ENCODE measurements at regions of chr10 and their contacts with region 1.

Region 1: GRCh38 chr10:87878664-87879459 is 15.4 kb downstream of the PTEN start:
- DNase-seq: no peak
- ATAC-seq: no peak
- H3K4me3 ChIP-seq: no peak overlapping the region
- H3K27ac ChIP-seq: no peak overlapping the region
- H3K4me1 ChIP-seq: peaks cover 0 to 80% (median 57%) of the 10 kb centered on the region in 12 donors
- H3K27me3 ChIP-seq: no peaks in the 10 kb centered on the region
- CTCF ChIP-seq: no peak
- POLR2A ChIP-seq: no peak

Region 2: GRCh38 chr10:87585565-87586514 is 293.0 kb before region 1 on chr10:
- intact Hi-C with region 1: no loop called
- DNase-seq: no peak
- ATAC-seq: no peak
- H3K4me3 ChIP-seq: no peak overlapping the region
- H3K27ac ChIP-seq: no peak overlapping the region
- H3K4me1 ChIP-seq: no peaks in the 10 kb centered on the region
- H3K27me3 ChIP-seq: no peaks in the 10 kb centered on the region
- CTCF ChIP-seq: no peak
- POLR2A ChIP-seq: no peak

Region 3: GRCh38 chr10:87752566-87752965 is 126.3 kb before region 1 on chr10:
- intact Hi-C with region 1: no loop called
- DNase-seq: no peak
- ATAC-seq: no peak
- H3K4me3 ChIP-seq: no peak overlapping the region
- H3K27ac ChIP-seq: no peak overlapping the region
- H3K4me1 ChIP-seq: peaks cover 0 to 5% (median 0%) of the 10 kb centered on the region in 12 donors
- H3K27me3 ChIP-seq: no peaks in the 10 kb centered on the region
- CTCF ChIP-seq: no peak
- POLR2A ChIP-seq: no peak

Region 4: DNA sequence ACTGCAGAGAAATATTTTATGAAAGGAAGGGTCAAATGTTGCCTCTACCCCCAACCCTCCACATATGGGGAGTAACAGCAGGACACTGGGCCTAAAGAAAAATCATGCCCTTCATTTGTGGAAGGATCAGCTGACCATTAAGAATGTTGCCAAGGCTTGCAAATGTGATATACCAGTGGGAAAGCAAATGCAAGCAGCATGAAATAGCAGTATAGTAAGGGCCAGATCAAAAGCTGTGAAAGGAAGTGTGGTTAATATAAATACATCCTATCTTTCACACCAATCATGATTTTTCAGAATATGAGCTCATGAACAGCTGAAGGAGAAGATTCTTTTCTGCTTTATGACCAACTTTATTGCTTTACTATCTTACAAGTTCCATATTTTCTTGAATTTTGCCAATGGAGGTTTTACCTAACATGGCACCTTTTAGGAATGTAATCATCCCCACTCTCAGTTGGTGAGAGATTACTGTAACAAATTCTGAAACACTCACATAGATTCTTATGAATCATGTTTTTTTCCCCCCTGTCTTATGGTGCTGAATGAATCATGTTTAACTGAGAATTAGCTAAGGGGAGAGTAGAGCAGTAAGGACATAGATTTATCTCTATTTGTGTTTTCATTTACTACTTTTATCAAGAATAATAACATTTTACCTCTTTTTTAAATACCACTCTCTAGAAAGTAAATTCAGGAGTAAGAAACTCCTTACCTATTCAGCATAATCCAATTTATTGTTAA is 48.7 kb before region 1 on chr10:
- intact Hi-C with region 1: no loop called
- DNase-seq: no peak
- ATAC-seq: no peak
- H3K4me3 ChIP-seq: no peak overlapping the region
- H3K27ac ChIP-seq: no peak overlapping the region
- H3K4me1 ChIP-seq: peaks cover 0 to 8% (median 0%) of the 10 kb centered on the region in 12 donors
- H3K27me3 ChIP-seq: no peaks in the 10 kb centered on the region
- CTCF ChIP-seq: no peak
- POLR2A ChIP-seq: no peak

Region 5: GRCh38 chr10:87842776-87843497 is 35.9 kb before region 1 on chr10:
- intact Hi-C with region 1: no loop called
- DNase-seq: no peak
- ATAC-seq: no peak
- H3K4me3 ChIP-seq: no peak overlapping the region
- H3K27ac ChIP-seq: no peak overlapping the region
- H3K4me1 ChIP-seq: peaks cover 0 to 4% (median 0%) of the 10 kb centered on the region in 12 donors
- H3K27me3 ChIP-seq: no peaks in the 10 kb centered on the region
- CTCF ChIP-seq: no peak
- POLR2A ChIP-seq: no peak

Region 6: DNA sequence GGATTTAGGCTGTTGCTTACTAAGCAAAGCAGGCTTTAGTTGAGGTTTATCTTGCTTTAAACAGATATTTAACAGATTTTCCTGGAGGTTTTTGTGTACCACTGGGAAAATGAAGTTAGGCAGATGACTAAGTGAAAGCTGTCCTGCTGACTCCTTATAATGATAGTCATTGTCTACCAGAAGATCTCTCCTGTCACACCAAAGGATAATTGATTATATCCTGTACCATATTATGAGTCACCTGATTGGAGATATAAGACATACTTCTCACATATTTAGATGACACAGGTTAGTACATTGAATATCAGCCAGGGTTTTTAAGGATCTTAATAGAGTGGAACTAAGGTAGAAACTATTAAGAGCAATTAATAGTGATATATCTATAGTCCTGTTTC is 53.0 kb after region 1 on chr10:
- intact Hi-C with region 1: loop called in 1 of 10 experiments (anchors 10 kb)
- DNase-seq: no peak
- ATAC-seq: no peak
- H3K4me3 ChIP-seq: no peak overlapping the region
- H3K27ac ChIP-seq: peak overlapping the region in 1 of 12 donors; percentile 32
- H3K4me1 ChIP-seq: peaks cover 0 to 75% (median 36%) of the 10 kb centered on the region in 12 donors
- H3K27me3 ChIP-seq: no peaks in the 10 kb centered on the region
- CTCF ChIP-seq: no peak
- POLR2A ChIP-seq: no peak